Naive thymus-derived CD4-positive, alpha-beta T cell (primary cell): ENCODE measurements at regions of chr2 and their contacts with region 1.

Region 1: DNA sequence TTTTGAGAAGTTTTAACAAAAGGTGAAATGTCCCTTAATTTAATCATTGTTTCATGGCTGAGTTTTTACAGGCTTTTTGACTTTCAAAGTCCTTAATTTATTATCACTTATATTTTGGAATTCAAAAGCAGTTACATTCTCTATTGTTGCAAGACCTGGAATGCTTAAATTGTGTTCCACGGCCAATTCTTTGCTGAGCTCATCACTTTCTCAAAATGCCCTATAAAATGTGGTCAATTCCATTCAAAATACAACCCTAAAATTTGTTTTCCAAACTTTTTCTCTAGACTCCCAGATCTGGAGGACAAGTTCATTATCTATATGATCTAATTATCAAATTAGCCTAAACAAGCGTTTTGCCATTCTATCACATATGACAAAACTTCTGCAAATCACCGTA is 1051.2 kb downstream of the TDRD15 start:
- DNase-seq: no peak
- ATAC-seq: no peak
- H3K4me3 ChIP-seq: no peak overlapping the region
- H3K4me3 Mint-ChIP-seq: no peak overlapping the region
- H3K27ac ChIP-seq: no peak overlapping the region
- H3K27ac Mint-ChIP-seq: no peak overlapping the region
- H3K4me1 ChIP-seq: no peaks in the 10 kb centered on the region
- H3K4me1 Mint-ChIP-seq: no peaks in the 10 kb centered on the region
- H3K27me3 ChIP-seq: no peaks in the 10 kb centered on the region
- H3K27me3 Mint-ChIP-seq: no peaks in the 10 kb centered on the region

Region 2: DNA sequence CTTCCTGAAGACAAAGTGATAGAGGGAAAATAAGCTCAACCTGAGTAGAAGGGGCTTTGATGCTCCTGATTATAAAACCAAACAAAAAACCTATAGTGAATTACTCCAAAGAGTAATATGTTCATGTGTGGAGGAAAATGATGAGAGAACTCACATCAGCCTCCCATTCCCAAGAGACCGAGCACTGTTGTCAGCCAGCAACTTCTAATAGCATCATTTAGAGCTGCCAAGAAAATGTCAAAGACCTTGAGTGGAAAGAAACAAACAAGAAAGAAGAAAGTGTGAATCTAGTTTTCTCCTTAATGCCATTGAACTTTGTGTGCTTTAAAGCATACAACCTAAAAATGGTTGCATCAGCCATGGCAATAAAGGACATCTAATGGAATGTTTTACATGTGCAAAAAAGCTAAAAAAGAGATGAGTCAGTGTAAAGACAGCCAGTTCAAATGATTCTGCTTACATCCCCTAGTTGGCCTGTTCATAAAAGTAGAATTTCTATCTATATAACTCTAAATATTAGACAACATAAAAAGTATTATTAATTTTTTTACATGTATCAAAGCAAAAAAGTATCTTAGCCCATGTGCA is 15.0 kb after region 1 on chr2:
- CTCF ChIA-PET with region 1: interaction called, 4 read pairs
- POLR2A ChIA-PET with region 1: no interaction called
- intact Hi-C with region 1: loop called in 1 of 2 experiments (anchors 1 kb)
- DNase-seq: no peak
- ATAC-seq: no peak
- H3K4me3 ChIP-seq: no peak overlapping the region
- H3K4me3 Mint-ChIP-seq: no peak overlapping the region
- H3K27ac ChIP-seq: no peak overlapping the region
- H3K27ac Mint-ChIP-seq: no peak overlapping the region
- H3K4me1 ChIP-seq: no peaks in the 10 kb centered on the region
- H3K4me1 Mint-ChIP-seq: no peaks in the 10 kb centered on the region
- H3K27me3 ChIP-seq: no peaks in the 10 kb centered on the region
- H3K27me3 Mint-ChIP-seq: no peaks in the 10 kb centered on the region

Region 3: GRCh38 chr2:22890132-22890531 is 715.1 kb after region 1 on chr2:
- CTCF ChIA-PET with region 1: no interaction called
- POLR2A ChIA-PET with region 1: no interaction called
- intact Hi-C with region 1: no loop called
- DNase-seq: no peak
- ATAC-seq: no peak
- H3K4me3 ChIP-seq: no peak overlapping the region
- H3K4me3 Mint-ChIP-seq: no peak overlapping the region
- H3K27ac ChIP-seq: no peak overlapping the region
- H3K27ac Mint-ChIP-seq: no peak overlapping the region
- H3K4me1 ChIP-seq: no peaks in the 10 kb centered on the region
- H3K4me1 Mint-ChIP-seq: no peaks in the 10 kb centered on the region
- H3K27me3 ChIP-seq: no peaks in the 10 kb centered on the region
- H3K27me3 Mint-ChIP-seq: peaks cover 0 to 13% (median 0%) of the 10 kb centered on the region in 5 donors